ENCODE measurements at regions of chr15 and their contacts with region 1.

Region 1: DNA sequence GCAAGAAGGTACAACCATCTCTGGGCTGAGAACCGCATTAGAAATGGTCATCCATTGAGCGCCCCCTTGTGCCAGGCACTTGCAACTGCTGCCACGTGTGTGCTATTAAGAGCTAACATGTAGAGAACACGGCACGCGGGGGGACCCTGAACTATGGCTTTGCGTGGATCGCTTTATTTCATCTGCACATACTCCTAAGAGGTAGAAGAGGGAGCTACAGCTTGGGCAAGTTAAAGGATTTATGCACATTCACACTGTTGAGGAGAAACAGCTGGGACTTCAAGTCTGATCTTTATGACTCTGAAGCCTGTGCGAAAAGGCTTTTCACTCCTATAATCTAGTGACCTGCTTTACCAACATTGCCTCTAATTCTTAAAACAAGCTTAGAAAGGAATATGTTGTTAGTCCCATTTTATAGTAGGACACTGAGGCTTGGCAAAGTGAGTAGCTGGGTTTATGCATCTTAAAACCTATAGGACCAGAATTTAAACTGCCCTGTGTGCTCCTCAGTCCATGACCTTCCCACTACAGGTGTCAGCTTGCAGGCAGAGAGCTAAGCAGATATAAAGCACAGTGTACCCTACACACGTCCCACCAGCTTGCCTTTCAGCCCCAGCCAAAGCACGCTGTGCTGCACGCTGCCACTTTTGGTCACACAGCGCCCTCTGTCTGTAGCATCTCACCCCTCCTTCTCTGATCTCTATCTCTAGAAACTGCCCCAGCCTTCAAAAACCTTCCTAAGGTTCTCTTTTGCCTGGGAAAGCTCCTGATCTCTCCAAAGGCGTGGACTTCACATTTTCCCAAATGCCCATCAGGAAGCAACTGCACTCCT is 57.8 kb downstream of the STARD5 start:
- DNase-seq: peak; percentile 75 to 88 (median 81)
- ATAC-seq: peak; percentile 87 to 93 (median 92)
- H3K4me3 ChIP-seq: peak overlapping the region in 2 of 12 donors; percentile 10 to 22
- H3K27ac ChIP-seq: no peak overlapping the region
- H3K4me1 ChIP-seq: peaks cover 0 to 26% (median 12%) of the 10 kb centered on the region in 12 donors
- H3K27me3 ChIP-seq: no peaks in the 10 kb centered on the region
- CTCF ChIP-seq: peak; percentile 76 to 92 (median 86)
- POLR2A ChIP-seq: no peak

Region 2: DNA sequence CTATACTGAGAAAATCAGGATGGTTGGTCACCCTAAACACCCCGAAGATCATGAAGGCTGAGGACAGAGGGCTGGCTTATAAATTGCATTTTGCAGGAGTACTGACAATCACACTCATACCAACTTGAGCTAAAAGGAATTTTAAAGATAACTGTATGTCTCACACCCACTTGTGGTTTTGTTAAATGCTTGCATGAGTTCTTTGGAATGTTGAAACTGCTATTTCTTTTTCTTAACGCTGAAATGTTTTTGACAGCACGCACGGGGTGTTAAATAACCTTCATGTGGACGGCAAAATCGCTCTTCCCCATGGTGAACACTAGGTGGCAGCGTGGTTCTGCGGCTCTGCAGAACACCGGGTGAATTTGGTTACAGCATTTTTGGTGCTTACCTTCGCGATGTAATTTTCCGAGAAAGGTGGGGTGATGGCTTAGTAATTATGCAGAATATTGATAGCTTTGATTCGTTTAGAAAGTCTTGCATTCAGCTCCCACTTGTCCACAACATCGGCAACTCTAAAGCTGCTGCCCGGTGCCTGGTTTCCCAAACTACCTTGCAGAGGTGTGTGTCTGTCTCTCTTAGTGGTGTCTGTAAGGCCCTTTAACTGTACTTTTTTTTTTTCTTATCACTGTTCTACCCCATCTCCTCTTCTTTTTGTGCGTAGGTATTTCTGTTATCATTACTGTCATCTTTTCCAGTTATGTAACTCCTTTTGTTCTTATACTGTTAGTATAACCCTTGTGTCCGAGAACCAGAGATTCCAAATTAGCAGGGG is 810.3 kb before region 1 on chr15:
- intact Hi-C with region 1: loop called in 4 of 10 experiments (anchors 5 to 10 kb)
- DNase-seq: peak in 3 of 5 donors; percentile 49 to 62 (median 49)
- ATAC-seq: peak; percentile 42 to 74 (median 67)
- H3K4me3 ChIP-seq: no peak overlapping the region
- H3K27ac ChIP-seq: no peak overlapping the region
- H3K4me1 ChIP-seq: peaks cover 0 to 7% (median 0%) of the 10 kb centered on the region in 12 donors
- H3K27me3 ChIP-seq: peaks cover 0 to 29% (median 0%) of the 10 kb centered on the region in 9 donors
- CTCF ChIP-seq: peak; percentile 90 to 97 (median 93)
- POLR2A ChIP-seq: no peak

Region 3: GRCh38 chr15:80977627-80978036 is 288.5 kb before region 1 on chr15:
- intact Hi-C with region 1: loop called in 8 of 10 experiments (anchors 2 to 10 kb)
- DNase-seq: peak; percentile 50 to 69 (median 53)
- ATAC-seq: peak; percentile 34 to 80 (median 72)
- H3K4me3 ChIP-seq: no peak overlapping the region
- H3K27ac ChIP-seq: no peak overlapping the region
- H3K4me1 ChIP-seq: peaks cover 0 to 39% (median 7%) of the 10 kb centered on the region in 12 donors
- H3K27me3 ChIP-seq: no peaks in the 10 kb centered on the region
- CTCF ChIP-seq: peak; percentile 35 to 65 (median 56)
- POLR2A ChIP-seq: no peak

Region 4: DNA sequence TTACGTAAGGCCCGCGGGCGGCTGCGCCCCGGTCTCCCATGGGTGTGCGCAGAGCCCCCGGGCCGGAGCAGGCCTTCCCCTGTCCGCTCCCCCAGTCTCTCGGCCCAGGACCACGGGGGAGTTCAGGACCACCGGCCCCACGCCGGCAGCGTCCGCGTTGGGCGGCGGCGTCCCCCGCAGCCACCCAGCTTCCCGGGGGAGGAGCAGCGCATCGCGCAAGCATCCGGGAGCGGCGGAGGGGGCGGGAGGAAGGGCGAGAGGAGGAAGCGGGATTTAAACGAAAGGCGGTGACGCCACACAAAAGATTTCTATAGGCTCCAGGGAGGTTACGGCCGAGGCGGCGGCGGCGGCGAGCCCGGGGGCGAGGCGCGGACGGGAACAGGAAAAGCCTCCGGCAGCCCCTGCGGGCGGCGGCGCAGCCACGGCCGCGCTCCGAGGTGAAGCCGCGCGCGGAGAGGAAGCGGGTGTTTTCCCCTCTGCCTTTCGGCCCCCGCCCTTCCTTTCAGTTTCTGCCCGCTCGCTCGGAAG is 265.5 kb before region 1 on chr15 and contains the start of gene TLNRD1:
- intact Hi-C with region 1: loop called in 2 of 10 experiments (anchors 5 to 10 kb)
- DNase-seq: peak; percentile 93 to 95 (median 94)
- ATAC-seq: peak; percentile 60 to 87 (median 83)
- H3K4me3 ChIP-seq: peak within 1 kb of the TSS; percentile 57 to 98 (median 90)
- H3K27ac ChIP-seq: peak within 1 kb of the TSS; percentile 88 to 100 (median 99)
- H3K4me1 ChIP-seq: peaks cover 3 to 55% (median 34%) of the 10 kb centered on the region in 12 donors
- H3K27me3 ChIP-seq: peaks cover 0 to 7% (median 0%) of the 10 kb centered on the region in 9 donors
- CTCF ChIP-seq: no peak
- POLR2A ChIP-seq: peak in 1 of 2 donors; percentile 81
- total RNA-seq, gene TLNRD1: 5.3 to 30.8 (median 8.0) TPM

Region 5: DNA sequence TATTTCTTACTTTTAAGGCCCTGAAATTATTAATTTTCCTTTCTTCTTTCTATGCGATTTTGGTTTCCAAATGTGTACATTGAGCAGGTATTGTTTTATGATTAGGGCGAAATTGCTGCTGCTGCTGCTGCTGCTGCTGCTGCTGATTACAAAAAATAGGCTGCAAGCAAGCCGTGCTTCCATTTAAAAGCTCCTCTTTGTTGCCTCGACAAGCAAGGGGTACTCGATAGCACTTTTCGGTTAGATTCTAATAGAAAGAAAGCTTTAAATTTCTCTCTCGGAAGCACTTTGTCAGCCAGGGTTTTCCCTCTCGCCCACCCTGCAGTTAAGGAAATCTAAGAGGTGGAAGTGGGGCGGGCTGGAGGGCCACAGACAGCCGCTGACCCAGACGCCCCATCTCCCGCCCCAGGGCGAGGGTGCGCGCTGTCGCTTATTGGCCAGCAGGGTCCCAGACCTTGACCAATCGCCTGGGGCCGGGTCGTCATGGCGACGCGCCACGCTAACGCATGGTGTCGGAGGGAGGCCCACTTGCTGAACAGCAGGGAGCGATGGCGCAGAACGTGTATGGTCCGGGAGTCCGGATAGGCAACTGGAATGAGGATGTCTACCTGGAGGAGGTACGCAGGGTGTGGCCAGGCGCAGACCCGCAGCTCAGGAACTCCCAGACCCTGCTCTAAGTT is 132.2 kb before region 1 on chr15 and contains the start of gene CFAP161:
- intact Hi-C with region 1: no loop called
- DNase-seq: peak; percentile 75 to 92 (median 87)
- ATAC-seq: peak; percentile 83 to 99 (median 93)
- H3K4me3 ChIP-seq: peak within 1 kb of the TSS in 10 of 12 donors; percentile 13 to 53 (median 40)
- H3K27ac ChIP-seq: no peak within 1 kb of the TSS
- H3K4me1 ChIP-seq: peaks cover 0 to 9% (median 0%) of the 10 kb centered on the region in 12 donors
- H3K27me3 ChIP-seq: peaks cover 0 to 18% (median 0%) of the 10 kb centered on the region in 9 donors
- CTCF ChIP-seq: peak in 1 of 12 donors; percentile 4
- POLR2A ChIP-seq: no peak
- total RNA-seq, gene CFAP161: 0.22 to 2.0 (median 0.81) TPM in 8 of 9 donors, not detected in the other

Region 6: GRCh38 chr15:81155375-81156218 is 110.6 kb before region 1 on chr15:
- intact Hi-C with region 1: loop called in 9 of 10 experiments (anchors 1 to 5 kb)
- DNase-seq: no peak
- ATAC-seq: peak in 2 of 4 donors; percentile 7 to 48
- H3K4me3 ChIP-seq: no peak overlapping the region
- H3K27ac ChIP-seq: no peak overlapping the region
- H3K4me1 ChIP-seq: peaks cover 0 to 24% (median 15%) of the 10 kb centered on the region in 12 donors
- H3K27me3 ChIP-seq: no peaks in the 10 kb centered on the region
- CTCF ChIP-seq: peak; percentile 29 to 78 (median 66)
- POLR2A ChIP-seq: no peak

Region 7: GRCh38 chr15:81189583-81190283 is 76.4 kb before region 1 on chr15:
- intact Hi-C with region 1: no loop called
- DNase-seq: peak; percentile 39 to 77 (median 73)
- ATAC-seq: peak; percentile 83 to 92 (median 88)
- H3K4me3 ChIP-seq: no peak overlapping the region
- H3K27ac ChIP-seq: peak overlapping the region in 11 of 12 donors; percentile 7 to 88 (median 62)
- H3K4me1 ChIP-seq: peaks cover 0 to 9% (median 0%) of the 10 kb centered on the region in 12 donors
- H3K27me3 ChIP-seq: peaks cover 0 to 6% (median 0%) of the 10 kb centered on the region in 9 donors
- CTCF ChIP-seq: no peak
- POLR2A ChIP-seq: no peak

Region 8: GRCh38 chr15:81211376-81211775 is 54.8 kb before region 1 on chr15:
- intact Hi-C with region 1: no loop called
- DNase-seq: peak in 1 of 5 donors; percentile 31
- ATAC-seq: peak in 2 of 4 donors; percentile 50 to 71
- H3K4me3 ChIP-seq: no peak overlapping the region
- H3K27ac ChIP-seq: peak overlapping the region in 1 of 12 donors; percentile 16
- H3K4me1 ChIP-seq: peaks cover 0 to 5% (median 0%) of the 10 kb centered on the region in 12 donors
- H3K27me3 ChIP-seq: no peaks in the 10 kb centered on the region
- CTCF ChIP-seq: no peak
- POLR2A ChIP-seq: no peak

Measured in heart left ventricle (tissue), 16 donors.